IMR-90 (cell line): ENCODE measurements at regions of chr14 and their contacts with region 1.

Region 1: DNA sequence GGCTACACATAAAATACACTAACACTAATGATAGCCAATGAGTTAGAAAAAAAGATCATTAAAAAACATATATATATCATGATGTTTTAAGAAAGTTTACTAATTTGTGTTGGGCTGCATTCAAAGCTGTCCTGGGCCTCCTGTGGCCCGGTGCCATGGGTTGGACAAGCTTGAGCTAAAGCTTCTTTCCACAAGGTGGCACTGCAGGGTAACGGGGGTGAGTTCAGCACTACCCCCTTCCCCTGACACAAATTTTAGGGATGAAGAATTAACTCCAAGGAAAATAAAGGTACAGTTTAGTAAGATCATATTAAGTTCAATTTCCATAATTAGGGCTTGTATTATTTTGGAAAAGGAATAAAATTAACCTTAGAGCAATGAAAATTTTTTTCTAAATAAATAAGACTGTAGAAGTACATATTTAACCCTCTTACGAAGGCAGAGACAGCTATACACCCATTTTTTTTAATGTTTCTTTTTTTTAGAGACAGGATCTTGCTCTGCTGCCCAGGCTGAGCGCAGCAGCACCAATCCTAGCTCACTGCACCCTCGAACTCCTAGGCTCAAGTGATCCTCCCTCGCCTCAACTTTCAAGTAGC is 38.9 kb downstream of the PPP1R13B start:
- DNase-seq: peak; percentile 65
- ATAC-seq: peak; percentile 91
- H3K4me3 ChIP-seq: no peak overlapping the region
- H3K27ac ChIP-seq: no peak overlapping the region
- H3K4me1 ChIP-seq: peaks cover 2% of the 10 kb centered on the region; the same call in 1 of the 2 replicates
- H3K27me3 ChIP-seq: no peaks in the 10 kb centered on the region
- CTCF ChIP-seq: peak; percentile 80
- POLR2A ChIP-seq: 0 out of 2 replicates have a peak, but pooled peaks have one; percentile 32
- RAD21 ChIP-seq: peak; percentile 86

Region 2: GRCh38 chr14:103910262-103910935 is 101.9 kb after region 1 on chr14:
- CTCF ChIA-PET with region 1: interaction called, 4 read pairs
- POLR2A ChIA-PET with region 1: no interaction called
- dilution Hi-C with region 1: no loop called
- in situ Hi-C with region 1: no loop called
- intact Hi-C with region 1: loop called (anchors 1 kb)
- DNase-seq: peak; percentile 66
- ATAC-seq: peak; percentile 93
- H3K4me3 ChIP-seq: no peak overlapping the region
- H3K27ac ChIP-seq: no peak overlapping the region
- H3K4me1 ChIP-seq: no peaks in the 10 kb centered on the region
- H3K27me3 ChIP-seq: no peaks in the 10 kb centered on the region
- CTCF ChIP-seq: peak; percentile 75
- POLR2A ChIP-seq: no peak
- RAD21 ChIP-seq: peak; percentile 77

Region 3: GRCh38 chr14:103920981-103921854 is 112.7 kb after region 1 on chr14:
- CTCF ChIA-PET with region 1: interaction called, 3 read pairs
- POLR2A ChIA-PET with region 1: no interaction called
- dilution Hi-C with region 1: no loop called
- in situ Hi-C with region 1: no loop called
- intact Hi-C with region 1: loop called (anchors 5 kb)
- DNase-seq: peak; percentile 89
- ATAC-seq: peak; percentile 100
- H3K4me3 ChIP-seq: peak overlapping the region; percentile 97
- H3K27ac ChIP-seq: peak overlapping the region; percentile 77
- H3K4me1 ChIP-seq: no peaks in the 10 kb centered on the region
- H3K27me3 ChIP-seq: peaks cover 5% of the 10 kb centered on the region; the same call in 1 of the 2 replicates
- CTCF ChIP-seq: peak; percentile 99
- POLR2A ChIP-seq: peak; percentile 46; the same call in 1 of the 2 replicates
- RAD21 ChIP-seq: peak; percentile 52

Region 4: DNA sequence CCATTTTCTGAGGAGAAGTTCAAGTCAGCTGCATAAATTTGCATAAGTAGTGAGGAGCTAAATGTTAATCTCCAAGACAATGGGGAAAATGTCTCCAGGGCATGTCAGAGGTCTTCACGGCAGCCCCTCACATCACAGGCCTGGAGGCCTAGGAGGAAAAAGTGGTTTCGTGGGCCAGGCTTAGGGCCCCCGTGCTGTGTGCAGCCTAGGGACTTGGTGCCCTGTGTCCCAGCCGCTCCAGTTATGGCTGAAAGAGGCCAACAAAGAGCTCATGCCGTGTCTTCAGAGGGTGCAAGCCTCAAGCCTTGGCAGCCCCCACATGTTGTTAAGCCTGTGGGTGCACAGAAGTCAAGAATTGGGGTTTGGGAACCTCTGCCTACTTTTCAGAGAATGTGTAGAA is 175.7 kb after region 1 on chr14:
- CTCF ChIA-PET with region 1: interaction called, 12 read pairs
- POLR2A ChIA-PET with region 1: no interaction called
- dilution Hi-C with region 1: no loop called
- in situ Hi-C with region 1: loop called (anchors 5 kb)
- intact Hi-C with region 1: loop called (anchors 1 kb)
- DNase-seq: no peak
- ATAC-seq: no peak
- H3K4me3 ChIP-seq: no peak overlapping the region
- H3K27ac ChIP-seq: no peak overlapping the region
- H3K4me1 ChIP-seq: no peaks in the 10 kb centered on the region
- H3K27me3 ChIP-seq: no peaks in the 10 kb centered on the region; the same call in none of the 2 replicates
- CTCF ChIP-seq: no peak
- POLR2A ChIP-seq: no peak
- RAD21 ChIP-seq: no peak